ENCODE measurements at regions of chr1 and their contacts with region 1.

Region 1: GRCh38 chr1:154546264-154547063 is 12.0 kb downstream of the UBE2Q1 start:
- DNase-seq: peak in 32 of 35 experiments; percentile 11 to 70 (median 32)
- ATAC-seq: peak; percentile 65 to 89 (median 78)
- H3K4me3 ChIP-seq: no peak overlapping the region
- H3K4me3 Mint-ChIP-seq: no peak overlapping the region
- H3K27ac ChIP-seq: no peak overlapping the region
- H3K27ac Mint-ChIP-seq: peak overlapping the region in 1 of 2 donors; percentile 64
- H3K4me1 ChIP-seq: no peaks in the 10 kb centered on the region
- H3K4me1 Mint-ChIP-seq: peaks cover 10 to 25% (median 19%) of the 10 kb centered on the region in 3 donors
- H3K27me3 ChIP-seq: peaks cover 0 to 6% of the 10 kb centered on the region in 2 experiments
- H3K27me3 Mint-ChIP-seq: peaks cover 0 to 7% of the 10 kb centered on the region in 2 donors

Region 2: DNA sequence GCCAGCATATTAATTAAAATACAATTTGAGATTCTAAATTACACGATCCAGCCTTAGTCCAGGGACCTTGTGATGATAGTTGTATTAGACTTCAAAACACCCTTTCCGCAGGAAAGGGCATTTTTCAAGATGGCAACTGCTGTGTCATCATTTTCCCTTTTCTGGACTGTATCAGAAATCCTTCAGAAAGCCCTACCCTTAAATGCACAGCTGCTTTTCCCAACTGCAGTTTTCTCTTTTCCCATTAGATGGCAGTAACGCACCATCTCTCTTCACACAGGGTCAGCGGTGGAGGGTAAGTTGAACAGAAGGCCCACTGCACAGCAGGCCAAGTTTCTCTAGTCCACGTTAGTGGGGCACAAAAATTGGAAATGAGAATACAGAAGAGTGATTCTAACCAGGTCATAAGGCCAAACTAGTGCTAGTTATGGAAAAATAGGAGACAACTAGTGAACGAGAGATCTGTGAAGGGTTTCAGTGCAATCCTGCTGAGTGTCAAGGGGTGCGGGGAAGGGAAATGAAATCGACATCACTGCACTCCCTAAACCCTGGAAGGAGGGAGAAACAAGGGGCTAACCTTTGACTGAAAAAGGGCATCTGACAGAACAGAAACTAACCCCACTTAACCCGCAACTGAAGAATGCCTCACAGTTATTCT is 66.6 kb before region 1 on chr1:
- CTCF ChIA-PET with region 1: interaction called, 7 to 25 read pairs
- POLR2A ChIA-PET with region 1: no interaction called
- DNase-seq: peak in 23 of 35 experiments; percentile 21 to 83 (median 40)
- ATAC-seq: peak; percentile 82 to 87 (median 83)
- H3K4me3 ChIP-seq: no peak overlapping the region
- H3K4me3 Mint-ChIP-seq: no peak overlapping the region
- H3K27ac ChIP-seq: no peak overlapping the region
- H3K27ac Mint-ChIP-seq: no peak overlapping the region
- H3K4me1 ChIP-seq: peaks cover 0 to 4% of the 10 kb centered on the region in 2 experiments
- H3K4me1 Mint-ChIP-seq: peaks cover 17 to 21% (median 18%) of the 10 kb centered on the region in 3 donors
- H3K27me3 ChIP-seq: no peaks in the 10 kb centered on the region
- H3K27me3 Mint-ChIP-seq: peaks cover 0 to 4% of the 10 kb centered on the region in 2 donors

Region 3: DNA sequence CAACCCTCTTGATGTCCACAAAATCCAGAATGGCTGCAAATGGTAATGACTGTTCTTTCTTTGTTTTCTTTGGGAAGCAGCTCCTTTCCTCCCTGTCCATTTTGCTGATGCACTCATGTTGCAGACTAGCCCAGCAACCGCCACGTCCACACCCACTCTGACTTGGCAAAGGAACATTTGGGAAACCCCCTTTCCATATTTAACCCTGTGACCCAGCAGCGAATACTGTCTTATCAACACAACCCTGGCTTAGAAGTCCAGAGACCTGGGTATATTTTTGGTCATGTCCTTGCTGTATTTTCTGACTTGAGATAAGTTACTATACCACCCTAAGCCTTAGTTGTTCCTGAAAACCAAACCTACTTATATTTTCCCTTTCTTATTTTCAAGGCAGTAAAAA is 26.1 kb before region 1 on chr1:
- CTCF ChIA-PET with region 1: no interaction called
- POLR2A ChIA-PET with region 1: no interaction called
- DNase-seq: no peak
- ATAC-seq: no peak
- H3K4me3 ChIP-seq: no peak overlapping the region
- H3K4me3 Mint-ChIP-seq: no peak overlapping the region
- H3K27ac ChIP-seq: no peak overlapping the region
- H3K27ac Mint-ChIP-seq: no peak overlapping the region
- H3K4me1 ChIP-seq: no peaks in the 10 kb centered on the region
- H3K4me1 Mint-ChIP-seq: peaks cover 0 to 4% (median 3%) of the 10 kb centered on the region in 3 donors
- H3K27me3 ChIP-seq: peaks cover 0 to 14% of the 10 kb centered on the region in 2 experiments
- H3K27me3 Mint-ChIP-seq: peaks cover 5 to 32% of the 10 kb centered on the region in 2 donors

Measured in T-cell (primary cell).